ENCODE measurements at regions of chr7 and their contacts with region 1.

Region 1: DNA sequence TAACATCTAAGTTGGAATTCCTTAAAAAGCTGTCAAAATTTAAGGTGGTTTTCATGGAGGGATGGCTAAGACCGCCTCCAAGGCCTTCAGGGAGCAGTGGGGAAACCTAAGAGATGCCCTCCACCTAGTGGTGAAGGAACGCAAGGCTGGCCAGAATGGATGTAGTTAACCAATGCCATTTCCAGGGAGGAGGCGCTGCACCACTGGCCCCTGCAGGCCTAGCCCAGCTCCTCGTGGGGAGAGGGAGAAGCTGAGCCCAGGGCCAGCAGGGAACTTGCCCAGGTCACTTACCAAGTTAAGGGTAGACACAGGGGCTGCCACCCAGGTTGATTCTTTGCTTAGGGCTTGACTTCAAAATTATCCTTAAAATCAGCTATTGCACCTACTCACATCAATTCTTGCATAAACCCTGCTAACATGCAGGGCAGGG is 32.0 kb downstream of the FIGNL1 start:
- DNase-seq: peak; percentile 92
- H3K4me3 Mint-ChIP-seq: no peak overlapping the region
- H3K27ac Mint-ChIP-seq: no peak overlapping the region
- H3K4me1 Mint-ChIP-seq: peaks cover 24% of the 10 kb centered on the region
- H3K27me3 Mint-ChIP-seq: no peaks in the 10 kb centered on the region

Region 2: GRCh38 chr7:49773218-49773935 is 644.7 kb before region 1 on chr7 and contains the start of gene VWC2:
- CTCF ChIA-PET with region 1: no interaction called
- intact Hi-C with region 1: no loop called
- DNase-seq: no peak
- H3K4me3 Mint-ChIP-seq: no peak within 1 kb of the TSS
- H3K27ac Mint-ChIP-seq: no peak within 1 kb of the TSS
- H3K4me1 Mint-ChIP-seq: peaks cover 12% of the 10 kb centered on the region
- H3K27me3 Mint-ChIP-seq: peaks cover 59% of the 10 kb centered on the region
- total RNA-seq, gene VWC2: not detected

Region 3: GRCh38 chr7:50142425-50143017 is 275.6 kb before region 1 on chr7:
- CTCF ChIA-PET with region 1: interaction called, 77 read pairs
- intact Hi-C with region 1: loop called (anchors 1 kb)
- DNase-seq: peak; percentile 64
- H3K4me3 Mint-ChIP-seq: peak overlapping the region; percentile 45
- H3K27ac Mint-ChIP-seq: peak overlapping the region; percentile 82
- H3K4me1 Mint-ChIP-seq: peaks cover 43% of the 10 kb centered on the region
- H3K27me3 Mint-ChIP-seq: no peaks in the 10 kb centered on the region

Region 4: DNA sequence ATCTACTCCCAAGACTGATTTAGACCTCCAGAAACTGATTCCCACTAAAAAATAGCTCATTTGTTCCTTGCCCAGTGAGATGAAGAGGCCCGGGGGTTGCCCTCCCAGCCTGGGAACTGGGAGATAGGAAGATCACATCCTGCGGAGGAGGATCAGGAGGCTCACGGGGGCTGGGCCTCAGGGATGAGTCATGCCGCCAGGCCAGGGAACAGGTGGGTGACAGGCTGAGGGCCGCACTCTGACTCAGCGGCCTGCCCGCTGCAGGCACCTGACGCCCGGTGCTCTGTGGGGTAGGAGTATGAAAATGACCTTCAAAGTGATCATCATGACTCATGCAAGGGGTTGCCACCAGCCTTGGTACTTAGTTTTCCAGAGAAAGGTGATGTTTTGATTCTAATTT is 220.6 kb before region 1 on chr7:
- CTCF ChIA-PET with region 1: interaction called, 106 read pairs
- intact Hi-C with region 1: no loop called
- DNase-seq: peak; percentile 83
- H3K4me3 Mint-ChIP-seq: no peak overlapping the region
- H3K27ac Mint-ChIP-seq: peak overlapping the region; percentile 52
- H3K4me1 Mint-ChIP-seq: peaks cover 37% of the 10 kb centered on the region
- H3K27me3 Mint-ChIP-seq: no peaks in the 10 kb centered on the region

Region 5: GRCh38 chr7:50266635-50267386 is 151.3 kb before region 1 on chr7:
- CTCF ChIA-PET with region 1: interaction called, 12 read pairs
- intact Hi-C with region 1: loop called (anchors 1 kb)
- DNase-seq: peak; percentile 84
- H3K4me3 Mint-ChIP-seq: peak overlapping the region; percentile 55
- H3K27ac Mint-ChIP-seq: peak overlapping the region; percentile 94
- H3K4me1 Mint-ChIP-seq: peaks cover 91% of the 10 kb centered on the region
- H3K27me3 Mint-ChIP-seq: no peaks in the 10 kb centered on the region

Region 6: DNA sequence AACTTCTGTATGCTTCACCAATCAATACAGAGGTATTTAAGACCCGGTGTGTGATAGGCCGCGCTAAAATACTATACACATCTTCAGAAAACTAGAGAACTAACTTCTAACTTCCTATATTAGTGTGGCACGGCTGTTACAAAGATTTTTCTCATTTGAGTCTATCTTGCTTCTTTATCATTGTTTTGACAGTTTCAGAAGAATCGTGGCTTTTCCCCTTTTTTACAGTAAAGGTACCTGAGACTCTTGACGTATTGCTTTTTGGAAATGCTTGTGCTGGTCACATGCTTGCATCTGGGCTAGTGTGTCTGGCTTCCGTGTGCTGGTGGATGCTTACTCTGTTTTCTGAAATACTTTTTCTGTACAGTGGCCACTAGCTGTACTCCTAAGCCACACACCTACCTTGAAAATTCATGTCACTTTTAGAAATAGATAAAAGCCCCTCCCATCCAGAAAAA is 100.9 kb before region 1 on chr7:
- CTCF ChIA-PET with region 1: interaction called, 11 read pairs
- intact Hi-C with region 1: loop called (anchors 2 kb)
- DNase-seq: peak; percentile 77
- H3K4me3 Mint-ChIP-seq: peak overlapping the region; percentile 71
- H3K27ac Mint-ChIP-seq: peak overlapping the region; percentile 99
- H3K4me1 Mint-ChIP-seq: peaks cover 90% of the 10 kb centered on the region
- H3K27me3 Mint-ChIP-seq: no peaks in the 10 kb centered on the region

Region 7: GRCh38 chr7:50397320-50397970 is 20.7 kb before region 1 on chr7:
- CTCF ChIA-PET with region 1: interaction called, 17 read pairs
- intact Hi-C with region 1: loop called (anchors 1 kb)
- DNase-seq: peak; percentile 60
- H3K4me3 Mint-ChIP-seq: no peak overlapping the region
- H3K27ac Mint-ChIP-seq: peak overlapping the region; percentile 78
- H3K4me1 Mint-ChIP-seq: peaks cover 81% of the 10 kb centered on the region
- H3K27me3 Mint-ChIP-seq: no peaks in the 10 kb centered on the region

Region 8: DNA sequence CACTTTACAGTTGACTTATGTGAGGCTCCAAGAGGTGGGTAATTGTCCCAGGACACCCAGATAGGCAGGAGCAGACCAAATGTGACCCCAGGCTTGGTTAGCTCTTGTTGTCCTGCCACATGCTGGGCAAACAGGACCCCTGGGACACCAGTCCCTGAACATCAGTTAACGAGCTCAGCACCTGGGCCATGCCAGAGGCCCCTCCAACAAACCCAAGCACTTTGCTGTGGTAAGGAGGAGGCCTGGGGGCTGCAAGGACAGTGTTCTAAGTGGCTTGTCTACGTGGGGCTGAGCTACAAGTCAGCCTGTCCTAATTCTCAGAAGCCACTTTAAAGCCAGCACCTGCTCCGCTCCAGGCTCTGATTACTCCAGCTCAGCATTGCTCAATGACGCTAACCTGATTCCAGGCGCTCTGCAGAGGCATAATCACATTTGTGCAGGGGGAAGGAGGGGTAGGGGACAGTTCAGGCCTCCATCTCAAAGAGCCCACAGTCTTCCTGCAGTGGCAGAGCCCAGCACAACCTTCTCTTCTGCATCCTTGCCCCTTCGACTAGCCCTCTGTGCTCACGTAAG is 89.9 kb after region 1 on chr7:
- CTCF ChIA-PET with region 1: no interaction called
- intact Hi-C with region 1: no loop called
- DNase-seq: no peak
- H3K4me3 Mint-ChIP-seq: no peak overlapping the region
- H3K27ac Mint-ChIP-seq: no peak overlapping the region
- H3K4me1 Mint-ChIP-seq: peaks cover 2% of the 10 kb centered on the region
- H3K27me3 Mint-ChIP-seq: no peaks in the 10 kb centered on the region

Measured in activated naive CD4-positive, alpha-beta T cell treated with anti-CD3 and anti-CD28 coated beads for 36 hours (primary cell).